ENCODE measurements at regions of chr13 and their contacts with region 1.

Region 1: GRCh38 chr13:113863436-113864272 is at the start of gene GAS6:
- DNase-seq: peak; percentile 66 to 82 (median 75)
- H3K4me3 ChIP-seq: peak within 1 kb of the TSS; percentile 82
- H3K27ac ChIP-seq: peak within 1 kb of the TSS; percentile 87 to 89
- H3K4me1 ChIP-seq: peaks cover 26% of the 10 kb centered on the region
- H3K27me3 ChIP-seq: no peaks in the 10 kb centered on the region
- CTCF ChIP-seq: no peak
- EP300 ChIP-seq: no peak
- POLR2A ChIP-seq: no peak
- total RNA-seq, gene GAS6: 98.3 to 336 (median 143) TPM

Region 2: GRCh38 chr13:113816946-113817859 is 46.5 kb before region 1 on chr13:
- intact Hi-C with region 1: loop called (anchors 2 to 5 kb)
- DNase-seq: peak; percentile 85 to 90 (median 89)
- H3K4me3 ChIP-seq: no peak overlapping the region
- H3K27ac ChIP-seq: no peak overlapping the region
- H3K4me1 ChIP-seq: peaks cover 25% of the 10 kb centered on the region
- H3K27me3 ChIP-seq: no peaks in the 10 kb centered on the region
- CTCF ChIP-seq: peak; percentile 64 to 84 (median 83)
- EP300 ChIP-seq: no peak
- POLR2A ChIP-seq: no peak

Region 3: GRCh38 chr13:113928685-113929627 is 65.3 kb after region 1 on chr13:
- intact Hi-C with region 1: loop called in 1 of 4 experiments (anchors 5 kb)
- DNase-seq: peak; percentile 77 to 87 (median 82)
- H3K4me3 ChIP-seq: no peak overlapping the region
- H3K27ac ChIP-seq: no peak overlapping the region
- H3K4me1 ChIP-seq: peaks cover 13% of the 10 kb centered on the region
- H3K27me3 ChIP-seq: no peaks in the 10 kb centered on the region
- CTCF ChIP-seq: no peak
- EP300 ChIP-seq: no peak
- POLR2A ChIP-seq: no peak

Region 4: DNA sequence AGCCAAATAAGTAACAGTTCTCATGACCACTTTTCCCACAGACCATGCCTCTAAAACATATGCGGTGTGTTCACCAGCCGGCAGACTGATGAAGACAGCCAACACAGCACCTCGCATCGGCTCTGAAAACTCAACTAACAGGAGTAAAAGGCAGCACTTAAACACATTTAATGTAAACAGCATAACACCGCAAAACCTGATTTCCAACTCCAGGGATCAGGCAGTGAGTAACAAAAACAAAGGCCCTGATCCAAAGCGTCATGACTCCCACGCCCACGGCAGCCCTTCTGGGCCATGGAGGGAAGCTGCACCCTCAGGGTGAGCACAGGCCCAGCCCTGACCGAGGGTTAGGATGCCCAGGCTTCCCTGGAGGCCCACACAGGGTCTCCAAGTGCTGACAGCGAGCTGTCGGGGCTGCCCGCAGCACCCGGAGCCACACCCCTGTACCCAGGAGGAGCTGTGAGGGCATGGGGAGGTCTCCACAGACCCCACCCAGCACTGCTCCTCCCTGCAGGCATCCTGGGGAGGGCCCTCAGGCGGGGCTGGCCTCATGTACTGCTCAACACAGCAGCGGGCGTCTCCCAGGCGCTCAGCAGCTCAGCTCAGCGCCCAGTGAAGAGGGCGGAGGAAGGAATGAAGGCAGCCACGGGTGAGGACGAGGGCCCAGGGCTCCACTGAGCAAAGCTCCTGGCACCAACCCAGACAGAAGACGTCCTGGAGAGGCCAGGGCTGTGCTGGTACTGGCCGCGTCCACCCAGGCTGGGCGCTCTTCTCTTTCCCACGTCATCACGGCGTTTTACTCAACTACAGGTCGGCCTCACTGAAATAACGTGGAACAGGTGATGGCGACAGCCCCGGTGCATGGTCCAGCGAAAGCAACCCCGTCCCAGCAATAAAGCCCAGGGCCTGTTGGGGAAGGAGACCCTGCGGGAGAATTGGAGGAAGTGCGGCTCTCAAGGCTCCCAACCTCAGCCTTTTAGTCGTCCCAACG is 215.1 kb after region 1 on chr13:
- intact Hi-C with region 1: no loop called
- DNase-seq: peak; percentile 12 to 42 (median 30)
- H3K4me3 ChIP-seq: no peak overlapping the region
- H3K27ac ChIP-seq: no peak overlapping the region
- H3K4me1 ChIP-seq: peaks cover 6% of the 10 kb centered on the region
- H3K27me3 ChIP-seq: no peaks in the 10 kb centered on the region
- CTCF ChIP-seq: no peak
- EP300 ChIP-seq: no peak
- POLR2A ChIP-seq: no peak

Measured in ovary (tissue), 10 donors.